Panc1 (cell line): ENCODE measurements at regions of chr10 and their contacts with region 1.

Region 1: GRCh38 chr10:119006451-119007210 is 22.9 kb upstream of the NANOS1 start:
- DNase-seq: peak; percentile 95
- ATAC-seq: peak; percentile 94
- H3K4me3 ChIP-seq: no peak overlapping the region; a peak in 1 of 4 replicates
- H3K27ac ChIP-seq: peak overlapping the region; percentile 68
- H3K4me1 ChIP-seq: peaks cover 24% of the 10 kb centered on the region
- H3K27me3 ChIP-seq: no peaks in the 10 kb centered on the region
- CTCF ChIP-seq: no peak

Region 2: GRCh38 chr10:118865998-118866693 is 140.5 kb before region 1 on chr10:
- CTCF ChIA-PET with region 1: no interaction called
- POLR2A ChIA-PET with region 1: no interaction called
- in situ Hi-C with region 1: no loop called
- intact Hi-C with region 1: loop called (anchors 10 kb)
- DNase-seq: no peak
- ATAC-seq: no peak
- H3K4me3 ChIP-seq: no peak overlapping the region
- H3K27ac ChIP-seq: no peak overlapping the region
- H3K4me1 ChIP-seq: peaks cover 4% of the 10 kb centered on the region; the same call in 1 of the 2 replicates
- H3K27me3 ChIP-seq: no peaks in the 10 kb centered on the region; the same call in 1 of the 2 replicates
- CTCF ChIP-seq: no peak

Region 3: GRCh38 chr10:118970770-118971169 is 35.9 kb before region 1 on chr10:
- CTCF ChIA-PET with region 1: no interaction called
- POLR2A ChIA-PET with region 1: no interaction called
- in situ Hi-C with region 1: loop called (anchors 5 kb)
- intact Hi-C with region 1: no loop called
- DNase-seq: no peak
- ATAC-seq: no peak
- H3K4me3 ChIP-seq: no peak overlapping the region
- H3K27ac ChIP-seq: no peak overlapping the region
- H3K4me1 ChIP-seq: no peaks in the 10 kb centered on the region; the same call in 1 of the 2 replicates
- H3K27me3 ChIP-seq: no peaks in the 10 kb centered on the region
- CTCF ChIP-seq: no peak